CD8-positive, alpha-beta T cell (primary cell): ENCODE measurements at regions of chr9 and their contacts with region 1.

Region 1: DNA sequence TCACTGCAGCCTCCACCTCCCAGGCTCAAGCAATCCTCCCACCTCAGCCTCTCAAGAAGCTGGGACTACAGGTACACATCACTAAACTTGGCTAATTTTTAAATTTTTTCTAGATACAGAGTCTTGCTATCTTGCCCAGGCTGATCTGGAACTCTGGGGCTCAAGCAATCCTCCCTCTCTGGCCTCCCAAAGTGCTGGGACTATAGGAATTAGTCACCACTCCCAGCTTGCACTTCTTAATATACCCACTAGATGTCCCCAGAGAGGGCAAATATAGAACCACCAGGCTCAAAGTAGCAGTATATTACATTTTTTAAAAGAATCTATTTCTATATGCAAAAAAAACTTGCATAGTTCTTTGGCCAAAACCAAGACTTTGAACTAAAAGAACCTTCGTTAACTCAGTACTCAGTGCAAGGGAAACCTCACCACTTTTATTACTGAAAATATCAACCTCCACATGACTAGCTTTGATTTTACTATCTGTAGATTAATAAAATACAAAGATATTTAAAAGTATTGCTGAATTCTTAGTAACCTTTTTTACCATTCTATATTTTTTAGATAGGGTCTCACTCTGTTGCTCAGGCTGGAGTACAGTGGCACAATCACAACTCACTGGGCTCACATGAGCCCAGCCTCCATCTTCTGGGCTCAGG is 25.8 kb upstream of the HSD17B3 start:
- DNase-seq: peak in 7 of 9 experiments; percentile 16 to 72 (median 52)
- ATAC-seq: peak; percentile 87
- H3K4me3 ChIP-seq: no peak overlapping the region
- H3K4me3 Mint-ChIP-seq: no peak overlapping the region
- H3K27ac ChIP-seq: no peak overlapping the region
- H3K27ac Mint-ChIP-seq: no peak overlapping the region
- H3K4me1 ChIP-seq: no peaks in the 10 kb centered on the region
- H3K4me1 Mint-ChIP-seq: no peaks in the 10 kb centered on the region
- H3K27me3 ChIP-seq: no peaks in the 10 kb centered on the region
- H3K27me3 Mint-ChIP-seq: no peaks in the 10 kb centered on the region
- CTCF ChIP-seq: peak; percentile 91

Region 2: DNA sequence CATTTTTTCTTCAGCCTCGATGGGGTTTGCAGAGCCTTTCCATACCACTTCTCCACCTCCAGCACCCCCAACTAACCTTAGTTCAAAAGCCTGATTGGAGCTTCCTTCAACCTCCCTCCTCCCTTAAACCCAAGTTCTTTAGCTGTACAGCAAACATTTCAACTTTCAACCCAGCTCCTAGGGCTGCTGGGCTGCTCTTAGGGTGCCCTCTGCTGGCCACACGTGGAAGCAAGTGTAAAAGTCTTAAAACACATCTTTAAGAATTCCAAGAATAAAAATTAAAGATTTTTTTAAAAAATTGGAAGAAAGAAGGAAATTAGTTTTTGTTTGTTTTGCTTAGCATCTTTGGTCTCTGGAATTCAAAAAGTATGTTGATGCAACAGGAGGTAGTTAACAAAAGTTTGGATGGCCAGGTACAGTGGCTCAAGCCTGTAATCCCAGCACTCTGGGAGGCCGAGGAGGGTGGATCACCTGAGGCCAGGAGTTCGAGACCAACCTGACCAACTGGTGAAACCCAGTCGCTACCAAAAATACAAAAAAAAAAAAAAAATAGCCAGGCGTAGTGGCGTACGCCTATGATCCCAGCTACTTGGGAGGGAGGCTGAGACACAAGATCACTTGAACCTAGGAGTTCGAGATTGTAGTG is 10.4 kb before region 1 on chr9:
- CTCF ChIA-PET with region 1: interaction called, 10 read pairs
- POLR2A ChIA-PET with region 1: no interaction called
- intact Hi-C with region 1: no loop called
- DNase-seq: peak in 7 of 9 experiments; percentile 13 to 73 (median 61)
- ATAC-seq: no peak
- H3K4me3 ChIP-seq: no peak overlapping the region
- H3K4me3 Mint-ChIP-seq: no peak overlapping the region
- H3K27ac ChIP-seq: no peak overlapping the region
- H3K27ac Mint-ChIP-seq: no peak overlapping the region
- H3K4me1 ChIP-seq: no peaks in the 10 kb centered on the region
- H3K4me1 Mint-ChIP-seq: no peaks in the 10 kb centered on the region
- H3K27me3 ChIP-seq: no peaks in the 10 kb centered on the region
- H3K27me3 Mint-ChIP-seq: no peaks in the 10 kb centered on the region
- CTCF ChIP-seq: peak; percentile 80

Region 3: GRCh38 chr9:96441798-96442445 is 114.1 kb after region 1 on chr9:
- CTCF ChIA-PET with region 1: interaction called, 11 read pairs
- POLR2A ChIA-PET with region 1: no interaction called
- intact Hi-C with region 1: loop called in 1 of 2 experiments (anchors 10 kb)
- DNase-seq: peak in 2 of 9 experiments; percentile 48 to 52
- ATAC-seq: peak; percentile 44
- H3K4me3 ChIP-seq: no peak overlapping the region
- H3K4me3 Mint-ChIP-seq: no peak overlapping the region
- H3K27ac ChIP-seq: no peak overlapping the region
- H3K27ac Mint-ChIP-seq: no peak overlapping the region
- H3K4me1 ChIP-seq: no peaks in the 10 kb centered on the region
- H3K4me1 Mint-ChIP-seq: no peaks in the 10 kb centered on the region
- H3K27me3 ChIP-seq: no peaks in the 10 kb centered on the region
- H3K27me3 Mint-ChIP-seq: no peaks in the 10 kb centered on the region
- CTCF ChIP-seq: no peak

Region 4: DNA sequence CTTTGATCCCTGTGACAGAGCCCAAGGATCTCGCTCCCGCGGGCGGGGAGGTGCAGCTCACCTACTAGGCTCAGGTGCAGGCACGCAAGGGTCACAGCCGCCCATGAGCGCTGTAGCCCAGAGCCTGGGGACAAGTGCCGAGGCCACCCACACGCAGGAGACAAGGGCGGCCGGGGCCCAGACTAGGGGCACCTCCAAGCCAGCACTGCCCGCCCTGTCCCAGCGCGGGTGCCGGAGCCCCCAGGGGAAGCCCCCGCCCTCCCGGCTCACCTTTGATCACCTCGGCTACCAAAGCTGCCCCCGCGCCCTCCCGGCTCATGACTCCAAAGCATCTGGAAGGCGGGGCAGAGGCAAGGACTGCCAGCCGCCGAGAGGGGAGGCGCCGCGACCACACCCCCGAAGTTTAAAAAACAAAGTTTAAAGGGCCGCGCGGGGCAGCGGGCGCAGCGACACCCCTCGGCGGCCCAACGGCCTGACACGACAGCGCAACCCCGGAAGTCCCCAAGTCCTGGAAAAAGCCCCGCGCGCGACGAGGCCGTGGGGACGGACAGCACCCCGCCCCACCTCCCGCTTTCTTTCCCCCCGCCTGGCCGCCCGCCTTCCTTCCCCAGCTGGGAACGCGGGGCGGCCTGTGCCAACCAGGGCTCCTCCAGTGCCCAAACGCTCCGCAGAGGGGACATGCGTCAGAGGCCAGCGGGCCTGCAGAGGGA is 238.8 kb after region 1 on chr9:
- CTCF ChIA-PET with region 1: interaction called, 11 read pairs
- POLR2A ChIA-PET with region 1: interaction called, 5 read pairs
- intact Hi-C with region 1: loop called (anchors 1 to 5 kb)
- DNase-seq: peak; percentile 57 to 92 (median 82)
- ATAC-seq: peak; percentile 86
- H3K4me3 ChIP-seq: peak overlapping the region; percentile 76 to 88
- H3K4me3 Mint-ChIP-seq: peak overlapping the region; percentile 86
- H3K27ac ChIP-seq: peak overlapping the region; percentile 87 to 91
- H3K27ac Mint-ChIP-seq: peak overlapping the region; percentile 84
- H3K4me1 ChIP-seq: peaks cover 24% of the 10 kb centered on the region
- H3K4me1 Mint-ChIP-seq: peaks cover 27% of the 10 kb centered on the region
- H3K27me3 ChIP-seq: no peaks in the 10 kb centered on the region
- H3K27me3 Mint-ChIP-seq: peaks cover 12% of the 10 kb centered on the region
- CTCF ChIP-seq: peak; percentile 58

Region 5: DNA sequence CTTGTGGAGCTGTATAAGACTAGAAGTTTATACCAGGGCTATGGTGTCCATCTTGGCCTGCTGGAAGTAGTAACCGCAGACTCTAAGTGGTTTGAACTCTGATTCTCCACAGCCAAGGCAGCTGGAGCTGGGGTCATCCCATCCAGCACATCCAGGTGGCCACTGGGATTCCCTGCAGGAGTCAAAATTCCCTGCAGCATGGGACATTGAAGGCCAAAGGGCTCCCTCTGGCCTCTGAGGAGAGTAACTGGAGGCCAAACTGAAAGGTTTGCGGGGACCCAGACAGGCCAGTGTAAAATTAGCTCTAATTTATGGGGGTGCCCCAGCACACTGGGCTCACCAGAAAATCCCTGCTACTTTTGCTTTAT is 339.5 kb after region 1 on chr9:
- CTCF ChIA-PET with region 1: interaction called, 19 read pairs
- POLR2A ChIA-PET with region 1: no interaction called
- intact Hi-C with region 1: loop called in 1 of 2 experiments (anchors 1 kb)
- DNase-seq: no peak
- ATAC-seq: no peak
- H3K4me3 ChIP-seq: no peak overlapping the region
- H3K4me3 Mint-ChIP-seq: no peak overlapping the region
- H3K27ac ChIP-seq: no peak overlapping the region
- H3K27ac Mint-ChIP-seq: no peak overlapping the region
- H3K4me1 ChIP-seq: no peaks in the 10 kb centered on the region
- H3K4me1 Mint-ChIP-seq: no peaks in the 10 kb centered on the region
- H3K27me3 ChIP-seq: no peaks in the 10 kb centered on the region
- H3K27me3 Mint-ChIP-seq: peaks cover 23% of the 10 kb centered on the region
- CTCF ChIP-seq: no peak

Region 6: GRCh38 chr9:97501177-97501971 is 1173.6 kb after region 1 on chr9 and contains the start of gene TMOD1:
- CTCF ChIA-PET with region 1: no interaction called
- POLR2A ChIA-PET with region 1: no interaction called
- intact Hi-C with region 1: no loop called
- DNase-seq: peak in 7 of 9 experiments; percentile 10 to 65 (median 41)
- ATAC-seq: peak; percentile 77
- H3K4me3 ChIP-seq: peak within 1 kb of the TSS; percentile 22 to 23
- H3K4me3 Mint-ChIP-seq: peak within 1 kb of the TSS; percentile 76
- H3K27ac ChIP-seq: no peak within 1 kb of the TSS
- H3K27ac Mint-ChIP-seq: no peak within 1 kb of the TSS
- H3K4me1 ChIP-seq: peaks cover 8% of the 10 kb centered on the region
- H3K4me1 Mint-ChIP-seq: peaks cover 16% of the 10 kb centered on the region
- H3K27me3 ChIP-seq: peaks cover 4 to 9% of the 10 kb centered on the region in 2 experiments
- H3K27me3 Mint-ChIP-seq: peaks cover 40% of the 10 kb centered on the region
- CTCF ChIP-seq: no peak
- total RNA-seq, gene TMOD1: 0.11 TPM